Mammary epithelial cell (primary cell): ENCODE measurements at regions of chr10 and their contacts with region 1.

Region 1: GRCh38 chr10:98446661-98447221 is at the start of gene HPS1:
- DNase-seq: peak; percentile 57
- H3K4me3 ChIP-seq: peak within 1 kb of the TSS; percentile 72 to 91 (median 75)
- H3K27ac ChIP-seq: peak within 1 kb of the TSS; percentile 68
- H3K4me1 ChIP-seq: peaks cover 8% of the 10 kb centered on the region
- H3K27me3 ChIP-seq: no peaks in the 10 kb centered on the region
- CTCF ChIP-seq: no peak
- total RNA-seq, gene HPS1: 37.3 to 54.6 TPM

Region 2: GRCh38 chr10:98299341-98299740 is 147.4 kb before region 1 on chr10:
- CTCF ChIA-PET with region 1: no interaction called
- dilution Hi-C with region 1: no loop called
- in situ Hi-C with region 1: no loop called
- intact Hi-C with region 1: no loop called
- DNase-seq: no peak
- H3K4me3 ChIP-seq: no peak overlapping the region
- H3K27ac ChIP-seq: no peak overlapping the region
- H3K4me1 ChIP-seq: peaks cover 28% of the 10 kb centered on the region
- H3K27me3 ChIP-seq: no peaks in the 10 kb centered on the region
- CTCF ChIP-seq: no peak

Region 3: GRCh38 chr10:98331885-98332284 is 114.9 kb before region 1 on chr10:
- CTCF ChIA-PET with region 1: no interaction called
- dilution Hi-C with region 1: no loop called
- in situ Hi-C with region 1: no loop called
- intact Hi-C with region 1: no loop called
- DNase-seq: peak; percentile 17
- H3K4me3 ChIP-seq: no peak overlapping the region
- H3K27ac ChIP-seq: no peak overlapping the region
- H3K4me1 ChIP-seq: no peaks in the 10 kb centered on the region
- H3K27me3 ChIP-seq: no peaks in the 10 kb centered on the region
- CTCF ChIP-seq: peak; percentile 58 to 79

Region 4: DNA sequence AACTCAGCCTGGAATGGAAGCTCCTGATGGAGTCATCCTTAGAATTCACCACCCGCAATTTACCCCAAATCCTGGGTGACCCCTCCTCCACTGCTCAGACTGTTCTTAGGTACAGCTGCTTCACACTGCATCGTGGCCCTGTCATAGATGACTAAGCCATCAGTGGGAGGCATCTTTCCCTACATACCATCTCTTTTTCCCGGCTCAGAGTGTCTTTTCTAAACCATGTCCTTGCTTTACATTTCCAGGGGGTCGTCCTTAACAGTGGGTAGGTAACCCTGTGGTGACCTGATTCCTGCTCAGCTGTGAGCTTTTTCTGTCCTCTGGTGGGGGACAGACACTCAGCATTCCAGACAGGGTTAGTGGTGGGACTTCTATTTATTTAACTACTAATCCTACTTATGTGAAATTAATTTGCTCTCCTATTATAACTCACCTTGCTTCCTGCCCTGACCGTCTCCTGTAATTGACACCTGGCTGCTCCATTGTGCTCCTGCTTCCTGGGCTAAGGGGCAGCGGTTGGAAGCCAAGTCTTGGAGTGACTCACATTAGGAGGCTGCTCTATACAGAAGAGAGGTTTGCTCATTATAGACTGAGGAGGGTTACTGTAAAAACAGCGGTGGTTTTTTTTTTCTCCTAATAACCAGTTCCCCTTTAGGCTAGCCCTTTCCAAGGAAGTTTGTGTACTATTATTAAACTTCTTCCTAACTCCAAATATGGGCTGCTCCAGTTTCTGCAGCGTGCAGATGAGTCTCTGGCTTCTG is 72.3 kb before region 1 on chr10:
- CTCF ChIA-PET with region 1: no interaction called
- dilution Hi-C with region 1: no loop called
- in situ Hi-C with region 1: no loop called
- intact Hi-C with region 1: no loop called
- DNase-seq: peak; percentile 75
- H3K4me3 ChIP-seq: no peak overlapping the region
- H3K27ac ChIP-seq: peak overlapping the region; percentile 26
- H3K4me1 ChIP-seq: peaks cover 14% of the 10 kb centered on the region
- H3K27me3 ChIP-seq: no peaks in the 10 kb centered on the region
- CTCF ChIP-seq: no peak

Region 5: DNA sequence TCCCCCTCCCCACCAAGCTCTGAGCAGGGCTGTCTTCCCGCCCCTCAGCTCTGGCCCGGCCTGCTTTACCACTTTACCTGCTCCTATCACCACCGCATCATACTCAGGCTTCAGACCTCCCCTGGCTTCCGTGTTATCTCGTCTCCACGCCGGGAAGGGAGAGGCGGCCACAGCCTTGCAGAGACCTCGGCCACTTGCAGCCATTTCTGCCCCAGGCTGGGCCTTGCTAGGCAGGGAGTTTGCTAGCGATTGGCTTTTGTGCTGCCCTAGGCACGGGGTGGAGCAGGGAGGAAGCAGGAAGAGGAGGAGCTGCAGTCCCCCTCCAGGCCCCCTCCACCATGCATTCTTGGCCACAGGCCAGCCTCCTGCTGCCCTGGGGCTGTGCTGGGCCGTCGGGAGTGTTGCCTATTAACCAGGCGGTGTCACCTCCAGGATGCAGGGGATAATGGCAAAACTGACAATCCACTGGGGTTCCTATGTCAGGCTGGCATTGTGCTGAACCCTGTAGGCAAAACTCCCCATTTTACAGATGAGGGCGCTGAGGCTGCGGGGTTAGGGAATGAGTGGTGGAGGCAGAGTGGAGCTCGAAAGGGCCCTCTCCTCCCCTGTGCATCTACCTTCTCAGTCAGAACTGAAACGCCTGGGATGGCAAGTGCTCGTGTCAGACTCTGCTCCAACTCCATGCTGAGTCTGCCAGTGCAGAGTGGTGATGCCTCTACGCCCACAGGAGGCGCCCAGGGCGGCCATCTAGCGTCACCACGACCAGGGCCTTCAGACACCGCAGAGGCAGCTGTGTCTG is 31.6 kb before region 1 on chr10 and contains the start of gene PYROXD2:
- CTCF ChIA-PET with region 1: no interaction called
- dilution Hi-C with region 1: no loop called
- in situ Hi-C with region 1: no loop called
- intact Hi-C with region 1: loop called (anchors 1 kb)
- DNase-seq: peak; percentile 78
- H3K4me3 ChIP-seq: peak within 1 kb of the TSS; percentile 54 to 69 (median 61)
- H3K27ac ChIP-seq: no peak within 1 kb of the TSS
- H3K4me1 ChIP-seq: peaks cover 9% of the 10 kb centered on the region
- H3K27me3 ChIP-seq: no peaks in the 10 kb centered on the region
- CTCF ChIP-seq: no peak
- total RNA-seq, gene PYROXD2: 8.3 to 10.2 TPM

Region 6: DNA sequence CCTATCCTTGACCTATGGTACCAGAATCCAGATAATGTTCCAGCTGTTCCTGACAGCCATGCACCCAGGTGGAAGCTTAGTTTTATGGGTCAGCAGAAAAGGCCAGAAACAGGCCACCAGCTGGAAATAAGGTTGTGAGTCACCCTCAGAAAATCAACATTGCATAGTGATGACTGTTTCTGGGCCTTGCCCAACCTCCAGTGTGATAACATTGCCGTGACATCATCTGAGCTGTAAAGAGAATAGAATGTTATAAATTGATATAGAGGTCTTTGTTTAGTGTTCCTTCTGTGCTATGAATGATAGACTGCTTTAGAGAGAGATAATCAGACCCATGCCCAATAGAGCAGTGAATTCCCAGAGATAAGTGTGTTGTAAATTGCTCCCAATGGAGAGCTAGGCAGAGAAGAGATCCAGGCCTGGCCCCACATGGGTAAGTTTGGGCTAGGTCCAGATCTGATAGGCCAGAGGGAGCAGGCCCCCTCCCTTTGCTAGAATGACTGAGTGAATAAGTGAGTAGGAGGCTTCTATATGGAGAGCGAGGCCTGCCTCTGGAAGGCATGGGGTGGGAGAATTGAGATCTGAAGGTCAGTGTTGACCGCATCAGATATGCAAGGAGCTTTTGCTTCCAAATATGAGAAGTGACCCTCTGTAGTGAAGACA is 14.2 kb after region 1 on chr10:
- CTCF ChIA-PET with region 1: no interaction called
- dilution Hi-C with region 1: no loop called
- in situ Hi-C with region 1: no loop called
- intact Hi-C with region 1: loop called (anchors 2 kb)
- DNase-seq: peak; percentile 87
- H3K4me3 ChIP-seq: no peak overlapping the region
- H3K27ac ChIP-seq: no peak overlapping the region
- H3K4me1 ChIP-seq: peaks cover 19% of the 10 kb centered on the region
- H3K27me3 ChIP-seq: no peaks in the 10 kb centered on the region
- CTCF ChIP-seq: no peak